ENCODE measurements at regions of chr10 and their contacts with region 1.

Region 1: DNA sequence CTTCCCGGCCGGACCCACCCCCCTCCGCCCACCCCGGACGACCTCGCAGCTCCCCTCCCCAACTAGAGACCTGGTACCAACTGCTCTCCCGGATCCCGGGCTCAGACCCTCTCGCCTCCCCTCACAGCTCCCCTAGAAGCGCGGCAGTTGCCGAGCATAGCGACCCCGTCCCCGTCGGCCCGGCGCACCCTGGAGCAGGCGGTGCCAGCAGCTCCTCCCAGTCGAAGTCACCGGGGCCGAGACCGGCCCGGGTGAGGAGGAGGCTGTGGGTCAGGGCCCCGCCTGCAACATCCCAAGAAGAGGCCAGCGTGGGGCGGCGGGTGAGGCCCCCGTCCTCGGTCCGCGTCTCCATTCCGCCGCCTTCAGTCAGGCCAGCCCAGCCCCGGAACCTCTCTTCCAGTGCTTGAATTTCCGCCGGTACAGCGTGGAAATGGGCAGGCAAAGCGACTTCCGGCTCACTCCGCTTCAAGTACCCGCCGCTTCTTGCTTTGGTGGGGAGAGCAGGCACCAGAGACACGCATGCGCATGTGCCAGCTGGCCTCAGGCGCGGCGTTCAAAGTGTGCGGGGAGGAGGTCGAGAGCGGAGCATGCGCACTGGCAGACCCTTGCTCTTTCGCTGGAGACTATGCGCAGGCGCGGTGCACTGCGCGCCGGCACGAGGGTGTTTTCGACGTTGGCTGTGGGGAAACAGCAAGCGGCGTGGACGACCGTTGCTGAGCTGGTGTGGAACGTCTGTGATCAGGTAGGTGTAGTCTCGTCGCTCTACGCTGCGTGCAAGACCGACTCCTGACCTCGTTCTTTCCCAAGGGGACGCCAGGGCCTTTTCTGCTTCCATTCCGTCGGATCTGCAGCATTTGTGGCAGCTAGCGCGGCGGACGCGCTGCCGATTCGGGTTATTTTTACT is at the start of gene C10orf88:
- DNase-seq: peak; percentile 96
- ATAC-seq: peak; percentile 99
- H3K4me3 ChIP-seq: peak within 1 kb of the TSS; percentile 87
- H3K27ac ChIP-seq: peak within 1 kb of the TSS; percentile 74
- H3K4me1 ChIP-seq: peaks cover 4 to 11% of the 10 kb centered on the region in 2 experiments; a peak in 3 of 5 replicates
- H3K27me3 ChIP-seq: no peaks in the 10 kb centered on the region
- CTCF ChIP-seq: no peak
- EP300 ChIP-seq: peak; percentile 18; the same call in 1 of the 2 replicates
- POLR2A ChIP-seq: peak; percentile 76
- RAD21 ChIP-seq: no peak
- polyA plus RNA-seq, gene C10orf88: 2.5 to 3.0 TPM

Region 2: DNA sequence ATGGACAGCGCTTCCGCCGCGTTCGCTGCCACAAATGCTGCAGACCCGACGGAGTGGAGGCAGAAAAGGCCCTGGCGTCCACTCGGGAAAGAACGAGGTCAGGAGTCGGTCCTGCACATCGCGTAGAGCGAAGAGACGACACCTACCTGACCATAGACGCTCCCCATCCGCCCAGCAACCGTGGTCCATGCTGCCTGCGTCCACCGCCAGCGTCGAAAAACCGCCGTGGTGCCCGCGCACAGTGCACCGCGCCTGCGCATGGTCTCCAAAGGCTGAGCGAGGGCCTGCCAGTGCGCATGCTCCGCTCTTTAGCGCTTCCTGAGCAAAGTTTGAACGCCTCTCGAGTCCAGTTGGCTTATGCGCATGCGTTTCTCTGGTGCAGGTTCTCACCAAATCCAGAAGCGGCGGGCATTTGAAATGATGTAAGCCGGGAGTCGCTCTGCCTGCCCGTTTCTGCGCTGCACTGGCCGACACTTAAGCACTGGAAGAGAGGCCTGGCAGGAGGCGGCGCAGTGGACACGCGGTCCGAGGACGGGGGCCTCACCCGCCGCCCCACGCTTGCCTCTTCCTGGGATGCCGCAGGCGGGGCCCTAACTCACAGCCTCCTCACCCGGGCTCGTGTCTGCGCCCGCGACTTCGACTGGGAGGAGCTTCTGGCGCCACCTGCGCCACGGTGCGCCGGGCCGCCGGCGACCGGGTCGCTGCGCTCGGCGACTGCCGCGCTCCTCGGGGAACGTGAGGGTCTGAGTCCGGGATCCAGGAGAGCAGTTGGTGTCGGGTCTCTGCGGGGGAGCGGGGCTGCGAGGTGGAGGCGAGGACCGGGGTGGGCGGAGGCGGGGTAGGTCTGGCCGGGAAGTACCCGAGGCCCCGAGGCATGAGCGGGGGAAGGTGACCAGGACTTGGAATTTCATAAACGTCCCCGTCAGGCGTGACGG is 74.5 kb before region 1 on chr10 and contains the start of gene FAM24B:
- CTCF ChIA-PET with region 1: no interaction called
- POLR2A ChIA-PET with region 1: no interaction called
- in situ Hi-C with region 1: no loop called
- intact Hi-C with region 1: loop called (anchors 5 kb)
- DNase-seq: peak; percentile 84 to 96 (median 90)
- ATAC-seq: peak; percentile 85
- H3K4me3 ChIP-seq: peak within 1 kb of the TSS; percentile 59
- H3K27ac ChIP-seq: peak within 1 kb of the TSS; percentile 90
- H3K4me1 ChIP-seq: peaks cover 9 to 24% of the 10 kb centered on the region in 2 experiments
- H3K27me3 ChIP-seq: no peaks in the 10 kb centered on the region
- CTCF ChIP-seq: no peak; a peak in 1 of 6 replicates
- EP300 ChIP-seq: no peak
- POLR2A ChIP-seq: peak; percentile 83
- RAD21 ChIP-seq: no peak
- polyA plus RNA-seq, gene FAM24B: 14.5 to 19.6 TPM

Region 3: DNA sequence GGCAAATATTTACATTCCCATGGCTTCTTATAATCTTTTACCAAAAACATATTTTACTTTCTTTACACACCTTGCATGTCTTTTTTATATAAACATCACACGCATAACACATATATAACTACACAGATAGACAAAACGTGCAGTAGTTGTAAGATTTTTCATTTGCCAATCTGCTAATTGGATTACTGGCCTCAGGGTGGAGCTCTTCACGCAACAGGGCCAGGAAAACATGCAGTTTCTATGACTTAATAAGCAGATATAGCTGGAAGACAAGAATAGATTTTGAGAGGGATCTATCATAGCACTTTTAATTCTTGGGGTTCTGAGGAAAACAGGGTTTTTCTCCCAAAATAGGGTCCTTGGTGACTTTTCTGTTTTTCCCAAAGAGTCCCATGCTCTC is 67.4 kb after region 1 on chr10:
- CTCF ChIA-PET with region 1: no interaction called
- POLR2A ChIA-PET with region 1: no interaction called
- in situ Hi-C with region 1: no loop called
- intact Hi-C with region 1: no loop called
- DNase-seq: peak in 1 of 4 experiments; percentile 16
- ATAC-seq: 0 out of 3 replicates have a peak, but pooled peaks have one; percentile 49
- H3K4me3 ChIP-seq: no peak overlapping the region
- H3K27ac ChIP-seq: no peak overlapping the region
- H3K4me1 ChIP-seq: no peaks in the 10 kb centered on the region; a peak in 1 of 5 replicates
- H3K27me3 ChIP-seq: no peaks in the 10 kb centered on the region
- CTCF ChIP-seq: peak; percentile 35 to 52 (median 38); a peak in 4 of 6 replicates
- EP300 ChIP-seq: no peak
- POLR2A ChIP-seq: no peak
- RAD21 ChIP-seq: 0 out of 4 replicates have a peak, but pooled peaks of 1 of the 2 experiments have one; percentile 13

Region 4: GRCh38 chr10:123081896-123082295 is 127.8 kb after region 1 on chr10:
- CTCF ChIA-PET with region 1: no interaction called
- POLR2A ChIA-PET with region 1: no interaction called
- in situ Hi-C with region 1: no loop called
- intact Hi-C with region 1: no loop called
- DNase-seq: no peak
- ATAC-seq: no peak
- H3K4me3 ChIP-seq: no peak overlapping the region
- H3K27ac ChIP-seq: no peak overlapping the region
- H3K4me1 ChIP-seq: no peaks in the 10 kb centered on the region
- H3K27me3 ChIP-seq: peaks cover 0 to 11% of the 10 kb centered on the region in 2 experiments; a peak in 3 of 5 replicates
- CTCF ChIP-seq: no peak
- EP300 ChIP-seq: no peak
- POLR2A ChIP-seq: no peak
- RAD21 ChIP-seq: no peak

Measured in K562 (cell line).